ENCODE measurements at regions of chr15 and their contacts with region 1.

Region 1: DNA sequence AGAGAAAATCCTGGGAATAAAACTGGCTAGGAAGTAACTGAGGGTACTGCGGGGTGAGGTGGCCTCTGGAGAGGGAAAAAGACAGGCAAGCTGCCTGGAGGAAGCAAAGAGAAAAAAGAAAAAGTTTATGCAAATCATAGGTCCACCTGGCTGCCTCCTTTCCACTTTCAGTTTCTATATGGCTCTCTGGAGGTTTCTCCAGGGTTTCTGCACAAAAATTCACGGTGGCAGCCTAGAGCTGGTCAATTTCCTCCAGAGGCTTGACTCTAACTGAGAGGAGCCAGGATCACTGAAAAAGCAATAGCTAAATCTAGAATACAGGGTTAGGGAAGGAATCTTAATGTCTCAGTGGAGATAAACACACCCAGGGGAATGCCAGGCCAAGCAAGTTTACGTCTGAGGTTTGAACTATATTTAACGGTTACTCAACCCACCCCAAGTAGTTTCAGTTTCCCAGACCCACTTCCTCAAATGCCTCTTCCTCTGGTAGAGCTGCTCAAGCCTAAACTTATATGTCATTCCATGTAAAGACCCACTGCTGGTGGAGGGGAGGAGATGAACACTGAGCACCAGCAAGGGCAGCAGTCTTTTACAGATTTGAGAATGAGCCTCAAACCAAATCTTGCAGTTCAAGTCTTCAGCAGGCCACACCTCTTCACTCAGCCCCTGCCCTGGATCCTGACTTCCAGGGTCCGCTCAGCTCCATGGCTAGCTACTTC is 5.7 kb downstream of the LYSMD2 start:
- DNase-seq: peak; percentile 56
- H3K4me3 Mint-ChIP-seq: peak overlapping the region; percentile 76
- H3K27ac Mint-ChIP-seq: peak overlapping the region; percentile 96
- H3K4me1 Mint-ChIP-seq: peaks cover 31% of the 10 kb centered on the region
- H3K27me3 Mint-ChIP-seq: no peaks in the 10 kb centered on the region
- CTCF ChIP-seq: no peak

Region 2: GRCh38 chr15:51312166-51313097 is 419.3 kb before region 1 on chr15:
- CTCF ChIA-PET with region 1: no interaction called
- POLR2A ChIA-PET with region 1: no interaction called
- intact Hi-C with region 1: no loop called
- DNase-seq: no peak
- H3K4me3 Mint-ChIP-seq: no peak overlapping the region
- H3K27ac Mint-ChIP-seq: no peak overlapping the region
- H3K4me1 Mint-ChIP-seq: peaks cover 18% of the 10 kb centered on the region
- H3K27me3 Mint-ChIP-seq: no peaks in the 10 kb centered on the region
- CTCF ChIP-seq: no peak

Region 3: GRCh38 chr15:51750792-51751685 is 19.3 kb after region 1 on chr15 and contains the start of gene TMOD2:
- CTCF ChIA-PET with region 1: interaction called, 3 read pairs
- POLR2A ChIA-PET with region 1: interaction called, 69 read pairs
- intact Hi-C with region 1: no loop called
- DNase-seq: no peak
- H3K4me3 Mint-ChIP-seq: peak within 1 kb of the TSS; percentile 72
- H3K27ac Mint-ChIP-seq: no peak within 1 kb of the TSS
- H3K4me1 Mint-ChIP-seq: peaks cover 10% of the 10 kb centered on the region
- H3K27me3 Mint-ChIP-seq: peaks cover 25% of the 10 kb centered on the region
- CTCF ChIP-seq: no peak
- total RNA-seq, gene TMOD2: 2.8 and 5.3 TPM in 2 replicates